Dendritic cell treated with granulocyte-macrophage colony-stimulating factor and Interleukin-4, amounts not matched to agents 40 ng/mL and 50 ng/mL, for 4 days (primary cell): ENCODE measurements at regions of chrX and their contacts with region 1.

Region 1: GRCh38 chrX:29488919-29489318 is 726.4 kb upstream of the MAGEB2 start:
- H3K4me3 Mint-ChIP-seq: no peak overlapping the region
- H3K27ac Mint-ChIP-seq: peak overlapping the region; percentile 58
- H3K4me1 Mint-ChIP-seq: peaks cover 23% of the 10 kb centered on the region
- H3K27me3 Mint-ChIP-seq: no peaks in the 10 kb centered on the region

Region 2: GRCh38 chrX:29241809-29242208 is 247.1 kb before region 1 on chrX:
- intact Hi-C with region 1: no loop called
- H3K4me3 Mint-ChIP-seq: no peak overlapping the region
- H3K27ac Mint-ChIP-seq: no peak overlapping the region
- H3K4me1 Mint-ChIP-seq: no peaks in the 10 kb centered on the region
- H3K27me3 Mint-ChIP-seq: no peaks in the 10 kb centered on the region

Region 3: DNA sequence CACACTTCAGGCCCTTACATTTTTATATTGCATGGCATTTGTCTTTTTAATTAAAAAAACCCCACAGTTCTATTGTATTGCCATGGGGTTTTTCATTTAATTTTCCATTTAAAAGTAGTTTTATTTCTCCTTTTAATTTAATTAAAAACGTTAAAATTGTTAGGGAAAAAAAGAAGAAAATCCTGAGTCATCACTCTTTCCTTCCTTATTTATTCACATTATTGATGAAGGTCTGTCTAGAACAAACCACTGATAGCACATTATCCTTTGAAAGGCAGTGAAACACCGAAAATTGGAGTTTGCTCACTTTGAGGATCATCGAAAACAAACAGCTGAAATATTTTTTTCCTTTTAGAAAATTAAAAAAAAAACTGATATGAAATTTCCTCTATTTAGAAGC is 33.2 kb before region 1 on chrX:
- intact Hi-C with region 1: loop called (anchors 2 kb)
- H3K4me3 Mint-ChIP-seq: no peak overlapping the region
- H3K27ac Mint-ChIP-seq: no peak overlapping the region
- H3K4me1 Mint-ChIP-seq: no peaks in the 10 kb centered on the region
- H3K27me3 Mint-ChIP-seq: no peaks in the 10 kb centered on the region

Region 4: DNA sequence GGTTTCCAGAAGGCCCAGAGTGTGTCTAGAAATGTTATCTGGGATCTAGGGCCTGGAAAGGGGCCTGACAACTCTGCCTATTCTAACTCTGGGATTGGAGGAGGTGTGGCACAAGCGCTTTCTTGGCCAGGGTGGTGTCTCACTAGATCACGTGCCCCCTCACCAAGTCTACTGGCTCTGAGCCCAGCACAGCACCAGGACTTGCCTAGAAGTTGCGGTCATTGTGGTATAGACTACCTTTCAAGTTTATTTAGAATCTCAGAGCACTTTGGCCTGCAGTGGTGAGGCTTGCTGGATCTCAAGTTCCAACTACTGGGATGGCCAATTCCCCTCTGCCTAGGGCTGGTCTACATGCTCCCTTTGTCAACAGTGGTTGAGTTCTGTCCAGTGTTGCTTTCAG is 503.2 kb after region 1 on chrX:
- intact Hi-C with region 1: no loop called
- H3K4me3 Mint-ChIP-seq: no peak overlapping the region
- H3K27ac Mint-ChIP-seq: no peak overlapping the region
- H3K4me1 Mint-ChIP-seq: no peaks in the 10 kb centered on the region
- H3K27me3 Mint-ChIP-seq: no peaks in the 10 kb centered on the region